Mammary epithelial cell (primary cell): ENCODE measurements at regions of chr4 and their contacts with region 1.

Region 1: GRCh38 chr4:141158219-141158618 is 24.9 kb upstream of the RNF150 start:
- DNase-seq: no peak
- H3K4me3 ChIP-seq: no peak overlapping the region
- H3K27ac ChIP-seq: no peak overlapping the region
- H3K4me1 ChIP-seq: no peaks in the 10 kb centered on the region
- H3K27me3 ChIP-seq: no peaks in the 10 kb centered on the region
- CTCF ChIP-seq: peak; percentile 23 to 47

Region 2: GRCh38 chr4:140861359-140862176 is 296.7 kb before region 1 on chr4:
- CTCF ChIA-PET with region 1: no interaction called
- dilution Hi-C with region 1: no loop called
- in situ Hi-C with region 1: no loop called
- intact Hi-C with region 1: loop called (anchors 2 kb)
- DNase-seq: peak; percentile 56
- H3K4me3 ChIP-seq: no peak overlapping the region
- H3K27ac ChIP-seq: no peak overlapping the region
- H3K4me1 ChIP-seq: peaks cover 25% of the 10 kb centered on the region
- H3K27me3 ChIP-seq: peaks cover 3% of the 10 kb centered on the region
- CTCF ChIP-seq: peak; percentile 75 to 76

Region 3: GRCh38 chr4:141196227-141196933 is 38.2 kb after region 1 on chr4:
- CTCF ChIA-PET with region 1: no interaction called
- dilution Hi-C with region 1: no loop called
- in situ Hi-C with region 1: no loop called
- intact Hi-C with region 1: no loop called
- DNase-seq: no peak
- H3K4me3 ChIP-seq: no peak overlapping the region
- H3K27ac ChIP-seq: no peak overlapping the region
- H3K4me1 ChIP-seq: no peaks in the 10 kb centered on the region
- H3K27me3 ChIP-seq: peaks cover 4% of the 10 kb centered on the region
- CTCF ChIP-seq: no peak

Region 4: GRCh38 chr4:141220655-141221605 is 62.7 kb after region 1 on chr4 and contains the start of gene ZNF330:
- CTCF ChIA-PET with region 1: no interaction called
- dilution Hi-C with region 1: no loop called
- in situ Hi-C with region 1: no loop called
- intact Hi-C with region 1: loop called (anchors 2 kb)
- DNase-seq: peak; percentile 80
- H3K4me3 ChIP-seq: peak within 1 kb of the TSS; percentile 84 to 88 (median 87)
- H3K27ac ChIP-seq: peak within 1 kb of the TSS; percentile 78
- H3K4me1 ChIP-seq: peaks cover 6% of the 10 kb centered on the region
- H3K27me3 ChIP-seq: no peaks in the 10 kb centered on the region
- CTCF ChIP-seq: peak in 1 of 2 donors; percentile 32
- total RNA-seq, gene ZNF330: 18.7 to 31.2 TPM

Region 5: DNA sequence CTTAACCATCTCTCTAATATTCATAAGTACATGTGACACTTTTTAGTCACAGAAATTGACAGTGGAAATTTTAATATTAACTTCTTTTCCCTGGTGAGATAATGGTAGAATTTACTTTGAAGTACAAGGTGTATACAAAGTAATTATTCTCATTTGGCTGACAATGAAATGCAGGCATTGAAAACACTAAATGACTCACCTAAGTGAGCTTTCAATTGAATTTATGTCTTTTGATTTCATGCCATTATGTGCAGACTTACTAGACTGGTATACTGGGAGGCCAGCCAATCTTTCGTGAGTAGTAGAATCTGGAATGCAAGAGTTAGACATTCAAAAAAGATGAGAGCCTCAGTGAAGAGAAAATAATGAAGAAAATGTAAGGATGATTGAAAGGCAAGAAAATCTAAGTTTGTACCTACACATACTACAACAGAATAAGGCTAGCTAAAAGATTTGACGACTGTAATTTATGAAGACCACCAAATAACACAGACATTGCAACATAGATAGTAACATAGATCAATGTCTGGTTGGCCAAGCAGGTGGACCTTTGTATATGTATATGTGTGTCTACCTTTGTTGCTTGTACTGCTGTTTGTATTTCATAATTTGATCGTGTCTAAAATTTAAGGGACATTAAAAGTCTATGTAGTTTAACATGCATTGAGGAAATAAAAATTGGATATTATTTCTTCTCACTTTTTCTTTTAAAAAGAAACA is 937.8 kb after region 1 on chr4:
- CTCF ChIA-PET with region 1: no interaction called
- dilution Hi-C with region 1: no loop called
- in situ Hi-C with region 1: no loop called
- intact Hi-C with region 1: loop called (anchors 5 kb)
- DNase-seq: peak; percentile 89
- H3K4me3 ChIP-seq: no peak overlapping the region
- H3K27ac ChIP-seq: peak overlapping the region; percentile 14
- H3K4me1 ChIP-seq: peaks cover 32% of the 10 kb centered on the region
- H3K27me3 ChIP-seq: no peaks in the 10 kb centered on the region
- CTCF ChIP-seq: no peak